ENCODE measurements at regions of chr17 and their contacts with region 1.

Region 1: GRCh38 chr17:4891411-4892342 is 7.7 kb upstream of the C17orf107 start:
- DNase-seq: no peak
- H3K4me3 ChIP-seq: no peak overlapping the region
- H3K27ac ChIP-seq: no peak overlapping the region
- H3K4me1 ChIP-seq: no peaks in the 10 kb centered on the region
- H3K27me3 ChIP-seq: no peaks in the 10 kb centered on the region
- CTCF ChIP-seq: no peak
- POLR2A ChIP-seq: no peak

Region 2: GRCh38 chr17:4709794-4710692 is 181.6 kb before region 1 on chr17 and contains the start of gene ARRB2:
- intact Hi-C with region 1: loop called (anchors 2 kb)
- DNase-seq: peak; percentile 97
- H3K4me3 ChIP-seq: peak within 1 kb of the TSS; percentile 65 to 66
- H3K27ac ChIP-seq: peak within 1 kb of the TSS; percentile 87
- H3K4me1 ChIP-seq: peaks cover 5% of the 10 kb centered on the region
- H3K27me3 ChIP-seq: no peaks in the 10 kb centered on the region
- CTCF ChIP-seq: peak; percentile 26 to 90 (median 72)
- POLR2A ChIP-seq: peak; percentile 67
- total RNA-seq, gene ARRB2: 12.5 to 30.1 TPM

Region 3: GRCh38 chr17:4733073-4733531 is 158.6 kb before region 1 on chr17:
- intact Hi-C with region 1: loop called (anchors 5 kb)
- DNase-seq: no peak
- H3K4me3 ChIP-seq: no peak overlapping the region
- H3K27ac ChIP-seq: no peak overlapping the region
- H3K4me1 ChIP-seq: peaks cover 2% of the 10 kb centered on the region
- H3K27me3 ChIP-seq: no peaks in the 10 kb centered on the region
- CTCF ChIP-seq: peak in 1 of 4 experiments; percentile 18
- POLR2A ChIP-seq: no peak

Region 4: GRCh38 chr17:4986951-4987766 is 95.5 kb after region 1 on chr17 and contains the start of gene CAMTA2:
- intact Hi-C with region 1: no loop called
- DNase-seq: peak; percentile 84
- H3K4me3 ChIP-seq: peak within 1 kb of the TSS; percentile 56 to 95
- H3K27ac ChIP-seq: peak within 1 kb of the TSS; percentile 88 to 96
- H3K4me1 ChIP-seq: peaks cover 18% of the 10 kb centered on the region
- H3K27me3 ChIP-seq: no peaks in the 10 kb centered on the region
- CTCF ChIP-seq: peak; percentile 64 to 92 (median 76)
- POLR2A ChIP-seq: peak; percentile 70
- total RNA-seq, gene CAMTA2: 13.6 to 40.2 TPM